ENCODE measurements at regions of chr1 and their contacts with region 1.

Region 1: GRCh38 chr1:209576798-209577197 is 6.7 kb upstream of the CAMK1G start:
- DNase-seq: peak; percentile 85
- ATAC-seq: peak; percentile 97

Region 2: DNA sequence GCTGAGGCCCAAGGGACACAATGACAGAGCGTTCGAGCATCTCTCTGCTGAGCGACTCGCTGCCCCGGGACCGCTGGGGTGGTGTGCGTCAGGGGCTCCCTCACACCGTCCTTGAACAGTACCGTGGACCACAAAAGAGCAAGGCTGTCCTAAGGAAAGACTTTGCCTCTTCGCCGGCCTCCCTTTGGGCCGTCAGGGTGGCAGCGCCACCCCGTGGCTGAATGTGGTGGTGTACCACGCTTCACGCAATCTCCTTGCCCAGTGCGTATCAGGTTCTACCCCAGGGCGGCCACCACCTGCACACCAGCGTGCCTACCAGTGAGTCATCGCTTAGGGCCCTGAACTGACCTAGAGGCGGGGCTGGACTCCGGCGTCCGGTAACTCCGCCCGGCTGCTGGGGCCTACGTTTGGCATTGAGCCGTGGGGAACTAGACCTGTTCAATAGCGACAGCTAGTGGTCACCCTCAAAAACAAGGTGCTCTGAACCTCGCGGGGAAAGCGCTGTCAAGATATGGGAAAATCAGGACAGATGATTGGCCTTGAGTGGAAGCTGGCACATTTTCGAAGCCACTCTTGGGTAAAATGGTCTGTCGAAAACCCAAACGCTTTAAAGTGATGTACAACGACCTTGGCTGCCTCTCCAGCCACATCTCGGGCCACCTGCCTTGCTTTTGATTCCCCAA is 170.9 kb after region 1 on chr1:
- intact Hi-C with region 1: loop called (anchors 5 kb)
- DNase-seq: peak; percentile 92
- ATAC-seq: peak; percentile 96

Region 3: DNA sequence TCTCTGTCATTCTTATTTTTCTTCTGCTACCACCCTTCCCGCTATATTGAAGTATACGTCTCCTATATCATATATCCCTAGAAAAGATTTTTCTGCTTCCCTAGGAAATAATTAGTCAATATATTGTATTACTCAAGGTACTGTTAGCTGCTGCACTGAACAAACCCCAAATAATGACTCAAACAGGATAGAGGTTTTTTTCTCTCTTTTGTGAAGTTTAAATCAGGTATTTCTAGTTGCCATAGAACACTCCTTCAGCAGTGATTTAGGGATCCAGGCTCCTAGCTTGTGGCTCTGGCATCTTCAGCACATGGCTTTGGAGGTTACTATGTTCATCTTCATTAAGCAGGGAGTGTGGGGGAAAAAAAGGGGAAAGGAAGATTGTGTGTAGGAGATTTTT is 379.3 kb after region 1 on chr1:
- intact Hi-C with region 1: no loop called
- DNase-seq: no peak
- ATAC-seq: no peak